ENCODE measurements at regions of chr3 and their contacts with region 1.

Region 1: DNA sequence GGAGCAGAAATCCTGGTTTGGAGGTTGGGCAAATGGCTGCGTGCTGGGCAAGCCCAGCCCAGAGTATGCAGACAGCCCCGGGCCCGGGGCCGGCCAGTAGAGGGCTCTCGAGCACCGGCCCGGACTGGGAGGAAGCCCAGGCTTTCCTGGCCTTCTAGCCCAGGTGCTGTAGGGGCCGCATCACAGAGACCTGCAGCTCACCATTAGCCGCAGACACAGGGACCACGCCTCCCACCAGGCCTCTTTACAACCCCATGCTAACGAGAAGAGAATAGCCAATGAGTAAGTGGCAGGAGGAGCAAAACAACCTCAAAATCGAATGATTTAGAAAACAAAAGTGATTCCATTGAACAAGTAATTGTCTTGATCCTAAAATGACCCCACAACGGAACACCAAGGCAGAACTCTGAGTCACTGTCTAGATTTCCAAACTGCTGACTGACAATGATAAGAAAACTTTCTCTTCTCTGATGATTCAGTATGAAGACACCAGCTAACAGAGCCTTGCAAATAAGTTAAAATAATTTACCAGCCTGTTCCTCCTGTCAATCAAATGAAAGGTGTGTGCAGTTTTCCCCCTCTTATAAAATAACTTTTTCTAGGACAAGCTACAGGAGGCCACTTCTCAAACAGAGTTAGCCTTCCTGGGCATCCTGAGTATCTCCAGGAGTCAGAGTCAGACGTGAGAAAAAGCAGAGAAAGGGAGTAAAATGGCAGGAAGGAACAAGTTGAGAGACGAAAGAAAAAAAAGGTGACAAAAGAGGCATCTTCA is 102.2 kb downstream of the DGKG start:
- DNase-seq: peak; percentile 53 to 86 (median 85)
- ATAC-seq: peak; percentile 91 to 94
- H3K4me3 ChIP-seq: no peak overlapping the region
- H3K27ac ChIP-seq: no peak overlapping the region
- H3K4me1 ChIP-seq: no peaks in the 10 kb centered on the region
- H3K27me3 ChIP-seq: no peaks in the 10 kb centered on the region

Region 2: GRCh38 chr3:185983495-185984141 is 276.2 kb before region 1 on chr3:
- intact Hi-C with region 1: loop called in 1 of 4 experiments (anchors 10 kb)
- DNase-seq: peak; percentile 54 to 74 (median 73)
- ATAC-seq: peak; percentile 86 to 94
- H3K4me3 ChIP-seq: no peak overlapping the region
- H3K27ac ChIP-seq: no peak overlapping the region
- H3K4me1 ChIP-seq: no peaks in the 10 kb centered on the region
- H3K27me3 ChIP-seq: no peaks in the 10 kb centered on the region

Region 3: GRCh38 chr3:186108941-186109865 is 150.6 kb before region 1 on chr3 and contains the start of gene ETV5:
- intact Hi-C with region 1: no loop called
- DNase-seq: peak; percentile 99
- ATAC-seq: peak; percentile 99
- H3K4me3 ChIP-seq: peak within 1 kb of the TSS; percentile 76
- H3K27ac ChIP-seq: peak within 1 kb of the TSS; percentile 93
- H3K4me1 ChIP-seq: peaks cover 6% of the 10 kb centered on the region
- H3K27me3 ChIP-seq: no peaks in the 10 kb centered on the region
- total RNA-seq, gene ETV5: 6.1 to 35.1 (median 7.3) TPM

Region 4: GRCh38 chr3:186361762-186362536 is 102.2 kb after region 1 on chr3 and contains the start of gene DGKG:
- intact Hi-C with region 1: no loop called
- DNase-seq: peak; percentile 34 to 81 (median 80)
- ATAC-seq: peak; percentile 79 to 86
- H3K4me3 ChIP-seq: peak within 1 kb of the TSS; percentile 47
- H3K27ac ChIP-seq: no peak within 1 kb of the TSS
- H3K4me1 ChIP-seq: peaks cover 2% of the 10 kb centered on the region
- H3K27me3 ChIP-seq: no peaks in the 10 kb centered on the region
- total RNA-seq, gene DGKG: 10.8 to 23.6 (median 17.9) TPM

Region 5: DNA sequence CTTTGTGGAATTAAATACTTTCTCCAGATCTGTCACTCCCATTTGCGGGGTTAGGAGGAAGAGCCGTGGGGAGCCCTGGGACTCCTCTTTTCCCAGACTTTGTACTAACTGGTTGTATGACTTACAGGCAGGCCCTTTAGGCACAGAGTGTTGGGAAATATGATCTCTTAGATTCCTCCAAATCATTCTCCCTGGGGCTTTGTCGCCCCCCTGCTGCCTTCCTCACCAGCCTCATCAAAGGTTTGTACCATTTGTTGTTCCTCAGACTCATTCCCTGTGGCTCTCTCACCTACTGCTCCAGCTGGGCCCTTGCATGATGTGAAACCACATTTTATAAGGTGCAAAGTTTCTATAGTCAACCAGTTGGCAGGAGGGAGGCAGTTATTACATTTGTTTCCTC is 228.0 kb after region 1 on chr3:
- intact Hi-C with region 1: loop called in 1 of 4 experiments (anchors 10 kb)
- DNase-seq: no peak
- ATAC-seq: no peak
- H3K4me3 ChIP-seq: no peak overlapping the region
- H3K27ac ChIP-seq: no peak overlapping the region
- H3K4me1 ChIP-seq: no peaks in the 10 kb centered on the region
- H3K27me3 ChIP-seq: no peaks in the 10 kb centered on the region

Region 6: GRCh38 chr3:186534113-186534669 is 274.4 kb after region 1 on chr3:
- intact Hi-C with region 1: loop called in 2 of 4 experiments (anchors 10 kb)
- DNase-seq: no peak
- ATAC-seq: no peak
- H3K4me3 ChIP-seq: no peak overlapping the region
- H3K27ac ChIP-seq: no peak overlapping the region
- H3K4me1 ChIP-seq: peaks cover 2% of the 10 kb centered on the region
- H3K27me3 ChIP-seq: no peaks in the 10 kb centered on the region

Region 7: DNA sequence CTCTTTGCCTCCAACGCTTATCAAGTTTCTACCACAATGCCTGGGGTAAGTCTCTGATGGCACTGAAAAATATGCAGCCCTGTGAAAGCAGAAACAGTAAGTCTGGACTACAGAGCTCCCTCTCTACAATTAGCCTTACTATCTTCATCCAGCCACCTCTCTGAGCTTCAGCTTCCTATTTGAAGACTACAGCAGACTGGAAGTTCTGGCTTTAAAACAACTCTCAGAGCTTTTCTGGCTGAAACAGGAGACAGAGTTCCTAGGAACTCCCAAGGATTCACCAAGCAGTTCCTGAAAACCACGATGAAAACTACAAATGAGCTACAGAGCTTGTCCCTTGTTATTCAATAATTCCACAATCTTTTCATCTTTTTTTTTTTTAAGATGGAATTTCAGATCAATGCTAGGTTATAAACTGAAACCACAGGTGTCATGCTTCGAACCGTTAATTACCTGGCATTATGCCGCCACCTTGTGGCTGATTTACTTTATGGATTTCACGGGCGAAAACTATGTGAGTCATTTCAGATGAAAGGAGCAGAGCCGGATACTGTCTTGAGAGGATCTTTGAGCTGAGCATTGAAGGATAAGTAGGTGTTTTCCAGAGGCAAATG is 280.5 kb after region 1 on chr3:
- intact Hi-C with region 1: loop called (anchors 5 to 10 kb)
- DNase-seq: peak in 2 of 3 donors; percentile 37 to 66
- ATAC-seq: peak; percentile 73 to 79
- H3K4me3 ChIP-seq: peak overlapping the region; percentile 25
- H3K27ac ChIP-seq: no peak overlapping the region
- H3K4me1 ChIP-seq: peaks cover 2% of the 10 kb centered on the region
- H3K27me3 ChIP-seq: no peaks in the 10 kb centered on the region

Measured in right cardiac atrium (tissue), 5 donors.